HEK293 (cell line): ENCODE measurements at regions of chr3 and their contacts with region 1.

Region 1: DNA sequence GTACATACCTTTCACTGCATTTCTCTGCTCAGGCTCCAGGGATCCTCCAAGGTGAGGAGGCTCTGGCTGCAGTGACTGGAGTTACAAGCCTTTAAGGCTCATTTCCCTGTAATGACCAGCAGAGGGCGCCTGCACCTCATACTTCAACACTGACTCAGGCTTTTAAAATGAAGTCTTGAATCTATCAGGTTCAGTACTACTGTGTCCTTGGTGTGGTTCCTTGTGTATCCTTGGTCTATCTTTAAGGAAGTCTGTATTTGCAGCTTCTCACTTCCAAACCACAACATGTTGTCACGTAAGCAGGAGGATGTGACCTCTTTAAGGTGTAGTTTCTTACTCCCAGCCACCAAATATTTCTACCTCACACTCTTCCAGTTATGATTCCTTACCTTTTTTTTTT is 122.5 kb upstream of the ZBED2 start:
- H3K4me3 ChIP-seq: no peak overlapping the region
- H3K27ac ChIP-seq: no peak overlapping the region
- H3K4me1 ChIP-seq: no peaks in the 10 kb centered on the region
- CTCF ChIP-seq: peak; percentile 74

Region 2: DNA sequence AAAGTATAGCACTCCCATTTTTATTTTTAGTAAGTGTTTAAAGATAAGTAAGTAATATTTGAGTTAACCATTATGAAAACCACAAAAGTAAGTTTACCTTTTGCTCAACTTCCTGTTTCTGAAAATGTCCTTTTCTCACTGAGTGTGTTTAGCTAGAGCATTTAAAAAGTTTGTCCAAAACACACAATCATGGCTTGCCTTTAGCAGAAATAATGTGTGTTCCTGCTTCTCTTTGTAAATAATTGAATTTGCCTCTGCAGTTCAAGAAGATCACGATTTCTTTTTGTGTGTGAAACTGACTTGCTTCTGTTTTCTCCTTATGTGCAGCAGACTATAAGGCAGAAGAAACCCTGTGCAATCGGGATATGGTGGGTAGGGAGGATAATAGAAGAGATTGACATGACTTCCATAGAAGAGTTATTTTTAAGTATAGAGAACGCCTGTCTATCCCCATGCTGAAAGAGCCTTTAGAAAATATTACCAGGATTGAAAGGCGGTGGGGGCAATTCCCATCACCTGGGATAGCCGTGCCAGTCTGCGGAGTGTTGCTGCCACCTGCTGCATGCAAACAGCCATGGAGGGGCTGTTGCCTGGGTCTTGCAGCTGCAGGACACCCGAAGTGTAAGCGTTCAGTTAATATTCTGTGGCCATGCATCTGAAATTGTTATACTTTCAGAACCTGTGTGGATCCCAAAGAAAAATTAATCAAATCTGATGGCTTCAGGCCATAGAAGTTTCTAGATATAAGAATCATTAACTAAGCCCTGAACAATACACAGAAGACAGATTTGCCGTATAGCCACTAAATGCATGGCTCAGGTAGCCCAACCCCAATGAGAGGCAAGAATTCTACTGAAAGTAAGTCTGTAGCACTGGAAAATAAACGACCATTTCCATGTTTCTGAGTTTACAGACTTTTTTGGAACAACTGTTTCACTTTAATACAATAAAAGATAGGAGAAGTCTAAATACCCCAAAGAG is 178.0 kb before region 1 on chr3:
- CTCF ChIA-PET with region 1: no interaction called
- POLR2A ChIA-PET with region 1: no interaction called
- H3K4me3 ChIP-seq: no peak overlapping the region
- H3K27ac ChIP-seq: no peak overlapping the region
- H3K4me1 ChIP-seq: no peaks in the 10 kb centered on the region
- CTCF ChIP-seq: peak; percentile 44; the same call in 1 of the 2 replicates

Region 3: DNA sequence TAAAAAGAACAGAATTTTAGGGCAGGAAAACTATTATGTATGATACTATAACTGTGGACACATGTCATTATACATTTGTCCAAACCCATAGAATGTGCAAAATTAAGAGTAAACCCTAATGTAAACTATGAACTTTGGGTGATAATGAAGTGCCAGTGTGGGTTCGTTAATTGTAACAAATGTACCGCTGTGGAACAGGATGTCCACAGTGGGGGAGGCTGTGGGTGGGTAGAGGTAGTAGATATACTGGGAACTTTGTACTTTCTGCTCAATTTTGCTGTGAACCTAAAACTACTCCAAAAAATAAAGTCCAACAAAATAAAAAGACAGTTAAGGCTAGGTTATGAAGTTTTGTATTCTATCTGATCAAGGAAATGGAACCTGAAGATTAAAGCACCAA is 150.8 kb before region 1 on chr3:
- CTCF ChIA-PET with region 1: no interaction called
- POLR2A ChIA-PET with region 1: no interaction called
- H3K4me3 ChIP-seq: no peak overlapping the region
- H3K27ac ChIP-seq: no peak overlapping the region
- H3K4me1 ChIP-seq: no peaks in the 10 kb centered on the region
- CTCF ChIP-seq: no peak

Region 4: GRCh38 chr3:111577794-111578685 is 139.6 kb before region 1 on chr3:
- CTCF ChIA-PET with region 1: interaction called, 24 read pairs
- POLR2A ChIA-PET with region 1: no interaction called
- H3K4me3 ChIP-seq: no peak overlapping the region
- H3K27ac ChIP-seq: no peak overlapping the region
- H3K4me1 ChIP-seq: no peaks in the 10 kb centered on the region
- CTCF ChIP-seq: peak; percentile 26; the same call in 1 of the 2 replicates

Region 5: DNA sequence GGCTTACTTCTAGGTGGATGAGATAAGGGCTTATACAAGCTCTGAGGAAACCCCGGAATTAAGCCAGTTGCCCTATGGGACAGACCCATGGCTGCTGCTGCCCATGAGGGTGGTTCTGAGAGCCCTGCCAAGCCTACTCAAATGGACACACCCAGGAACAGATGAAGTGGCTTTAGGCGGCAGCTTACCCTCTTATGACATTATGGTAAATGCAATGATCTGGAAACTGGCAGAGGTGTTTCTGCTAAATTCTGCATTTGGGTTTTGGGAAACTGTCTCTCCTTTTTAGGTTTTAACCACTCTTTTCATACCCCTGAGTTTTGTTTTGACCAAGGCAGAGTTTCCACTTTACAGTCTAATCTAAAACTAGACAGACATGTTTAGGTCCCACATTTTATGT is 113.5 kb before region 1 on chr3:
- CTCF ChIA-PET with region 1: no interaction called
- POLR2A ChIA-PET with region 1: no interaction called
- H3K4me3 ChIP-seq: no peak overlapping the region
- H3K27ac ChIP-seq: no peak overlapping the region
- H3K4me1 ChIP-seq: no peaks in the 10 kb centered on the region
- CTCF ChIP-seq: no peak

Region 6: DNA sequence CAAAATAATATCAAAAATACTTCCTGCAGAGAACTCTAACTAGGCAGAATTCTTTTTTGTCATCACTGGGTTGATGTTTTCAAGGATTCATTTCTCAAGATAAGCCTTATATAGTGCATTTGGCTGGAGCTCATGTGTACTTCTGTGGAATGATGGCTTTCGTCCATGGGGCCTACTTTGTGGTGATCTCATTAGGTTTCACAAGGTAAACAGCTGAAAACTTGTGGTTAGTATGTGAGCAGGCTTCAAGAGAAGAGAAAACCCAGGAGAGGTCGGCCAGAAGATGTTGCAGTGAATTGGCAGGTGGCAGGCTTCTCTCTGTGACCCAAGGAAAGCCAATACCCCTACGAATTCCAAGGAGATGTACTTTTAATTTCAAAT is 20.1 kb after region 1 on chr3:
- CTCF ChIA-PET with region 1: interaction called, 10 read pairs
- POLR2A ChIA-PET with region 1: no interaction called
- H3K4me3 ChIP-seq: no peak overlapping the region
- H3K27ac ChIP-seq: peak overlapping the region; percentile 27; the same call in 1 of the 2 replicates
- H3K4me1 ChIP-seq: peaks cover 21% of the 10 kb centered on the region
- CTCF ChIP-seq: no peak

Region 7: GRCh38 chr3:111895079-111895478 is 177.5 kb after region 1 on chr3:
- CTCF ChIA-PET with region 1: interaction called, 25 read pairs
- POLR2A ChIA-PET with region 1: no interaction called
- H3K4me3 ChIP-seq: no peak overlapping the region
- H3K27ac ChIP-seq: no peak overlapping the region
- H3K4me1 ChIP-seq: no peaks in the 10 kb centered on the region
- CTCF ChIP-seq: no peak

Region 8: DNA sequence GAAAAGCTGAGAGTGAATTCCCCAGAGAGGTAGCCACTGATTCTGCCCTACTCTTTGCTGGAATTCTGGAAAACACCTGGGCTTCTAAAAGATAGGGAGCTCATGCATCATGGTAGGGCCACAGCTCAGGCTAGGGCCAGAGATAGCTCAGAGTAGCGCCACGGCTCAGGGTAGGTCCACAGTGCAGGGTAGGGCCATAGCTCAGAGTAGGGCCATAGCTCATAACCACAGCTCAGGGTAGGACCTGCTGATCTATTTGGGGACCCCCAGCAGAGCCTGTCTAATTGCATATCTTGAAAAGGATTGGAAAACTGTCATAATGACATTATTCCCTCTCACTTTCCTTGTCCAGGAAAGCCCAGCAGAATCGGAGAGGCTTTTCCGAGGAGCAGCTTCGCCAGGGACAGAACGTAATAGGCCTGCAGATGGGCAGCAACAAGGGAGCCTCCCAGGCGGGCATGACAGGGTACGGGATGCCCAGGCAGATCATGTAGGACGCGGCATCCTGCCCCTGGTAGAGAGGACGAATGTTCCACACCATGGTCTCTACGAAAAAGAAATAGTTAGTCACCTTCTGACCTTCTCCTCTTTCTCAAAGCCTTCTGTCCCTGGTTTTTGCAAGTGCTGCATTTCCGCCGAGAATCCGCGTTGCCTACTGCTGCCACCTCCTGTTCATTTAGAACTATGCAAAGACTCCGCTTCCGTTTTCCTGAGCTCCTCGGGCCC is 295.6 kb after region 1 on chr3:
- CTCF ChIA-PET with region 1: interaction called, 35 read pairs
- POLR2A ChIA-PET with region 1: no interaction called
- H3K4me3 ChIP-seq: no peak overlapping the region
- H3K27ac ChIP-seq: no peak overlapping the region
- H3K4me1 ChIP-seq: no peaks in the 10 kb centered on the region
- CTCF ChIP-seq: no peak